Activated CD4-positive, alpha-beta T cell treated with anti-CD3 and anti-CD28 coated beads, Interleukin-2, amount 10 ng/mL, durations not matched to agents 24 days and 14 days (primary cell): ENCODE measurements at regions of chr7 and their contacts with region 1.

Region 1: GRCh38 chr7:48299580-48300169 is 128.4 kb downstream of the ABCA13 start:
- DNase-seq: peak; percentile 83
- H3K4me3 Mint-ChIP-seq: no peak overlapping the region
- H3K27ac Mint-ChIP-seq: no peak overlapping the region
- H3K4me1 Mint-ChIP-seq: peaks cover 4% of the 10 kb centered on the region
- H3K27me3 Mint-ChIP-seq: peaks cover 2% of the 10 kb centered on the region

Region 2: GRCh38 chr7:48130658-48131108 is 169.0 kb before region 1 on chr7:
- intact Hi-C with region 1: loop called (anchors 2 kb)
- DNase-seq: peak; percentile 44
- H3K4me3 Mint-ChIP-seq: no peak overlapping the region
- H3K27ac Mint-ChIP-seq: no peak overlapping the region
- H3K4me1 Mint-ChIP-seq: peaks cover 5% of the 10 kb centered on the region
- H3K27me3 Mint-ChIP-seq: peaks cover 23% of the 10 kb centered on the region

Region 3: DNA sequence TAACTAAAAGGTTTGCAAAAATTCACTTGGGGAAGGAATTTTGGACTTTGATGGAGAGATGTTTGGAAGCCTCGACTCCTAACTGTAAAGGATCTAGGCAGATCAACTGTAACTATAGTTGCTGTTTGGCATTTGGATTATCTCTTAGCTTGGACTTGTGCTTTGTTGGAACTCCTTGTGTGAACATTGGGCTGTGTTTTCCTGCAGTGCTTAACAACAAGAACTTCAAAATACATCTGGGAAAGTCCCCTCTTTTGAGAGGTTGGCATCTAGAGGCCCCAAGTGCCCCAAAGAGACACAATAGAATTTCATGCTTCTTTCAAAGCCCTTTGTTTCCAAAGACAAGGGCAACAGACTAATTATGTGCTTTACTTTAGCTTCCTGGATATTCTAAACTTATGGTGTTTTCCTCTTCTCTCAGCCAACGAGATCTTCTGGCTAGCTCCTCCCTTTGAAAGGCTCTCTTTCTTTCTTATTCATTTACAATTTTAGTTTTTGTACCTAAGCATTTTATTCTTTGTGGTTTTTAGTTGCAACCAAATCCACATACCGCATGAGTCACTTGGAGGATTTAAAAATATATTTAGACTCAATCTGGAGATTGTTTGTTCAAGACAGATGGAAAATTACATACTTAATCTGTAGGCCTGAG is 116.8 kb before region 1 on chr7:
- intact Hi-C with region 1: loop called (anchors 1 kb)
- DNase-seq: no peak
- H3K4me3 Mint-ChIP-seq: no peak overlapping the region
- H3K27ac Mint-ChIP-seq: peak overlapping the region; percentile 52
- H3K4me1 Mint-ChIP-seq: peaks cover 3% of the 10 kb centered on the region
- H3K27me3 Mint-ChIP-seq: peaks cover 4% of the 10 kb centered on the region

Region 4: GRCh38 chr7:48255046-48255445 is 44.6 kb before region 1 on chr7:
- intact Hi-C with region 1: loop called (anchors 1 kb)
- DNase-seq: no peak
- H3K4me3 Mint-ChIP-seq: no peak overlapping the region
- H3K27ac Mint-ChIP-seq: peak overlapping the region; percentile 25
- H3K4me1 Mint-ChIP-seq: peaks cover 10% of the 10 kb centered on the region
- H3K27me3 Mint-ChIP-seq: no peaks in the 10 kb centered on the region

Region 5: GRCh38 chr7:48875045-48875916 is 575.6 kb after region 1 on chr7:
- intact Hi-C with region 1: loop called (anchors 10 kb)
- DNase-seq: no peak
- H3K4me3 Mint-ChIP-seq: no peak overlapping the region
- H3K27ac Mint-ChIP-seq: no peak overlapping the region
- H3K4me1 Mint-ChIP-seq: no peaks in the 10 kb centered on the region
- H3K27me3 Mint-ChIP-seq: no peaks in the 10 kb centered on the region